GM18951 (cell line): ENCODE measurements at regions of chr17 and their contacts with region 1.

Region 1: GRCh38 chr17:57906910-57907309 is 48.3 kb downstream of the CUEDC1 start:
- POLR2A ChIP-seq: no peak

Region 2: DNA sequence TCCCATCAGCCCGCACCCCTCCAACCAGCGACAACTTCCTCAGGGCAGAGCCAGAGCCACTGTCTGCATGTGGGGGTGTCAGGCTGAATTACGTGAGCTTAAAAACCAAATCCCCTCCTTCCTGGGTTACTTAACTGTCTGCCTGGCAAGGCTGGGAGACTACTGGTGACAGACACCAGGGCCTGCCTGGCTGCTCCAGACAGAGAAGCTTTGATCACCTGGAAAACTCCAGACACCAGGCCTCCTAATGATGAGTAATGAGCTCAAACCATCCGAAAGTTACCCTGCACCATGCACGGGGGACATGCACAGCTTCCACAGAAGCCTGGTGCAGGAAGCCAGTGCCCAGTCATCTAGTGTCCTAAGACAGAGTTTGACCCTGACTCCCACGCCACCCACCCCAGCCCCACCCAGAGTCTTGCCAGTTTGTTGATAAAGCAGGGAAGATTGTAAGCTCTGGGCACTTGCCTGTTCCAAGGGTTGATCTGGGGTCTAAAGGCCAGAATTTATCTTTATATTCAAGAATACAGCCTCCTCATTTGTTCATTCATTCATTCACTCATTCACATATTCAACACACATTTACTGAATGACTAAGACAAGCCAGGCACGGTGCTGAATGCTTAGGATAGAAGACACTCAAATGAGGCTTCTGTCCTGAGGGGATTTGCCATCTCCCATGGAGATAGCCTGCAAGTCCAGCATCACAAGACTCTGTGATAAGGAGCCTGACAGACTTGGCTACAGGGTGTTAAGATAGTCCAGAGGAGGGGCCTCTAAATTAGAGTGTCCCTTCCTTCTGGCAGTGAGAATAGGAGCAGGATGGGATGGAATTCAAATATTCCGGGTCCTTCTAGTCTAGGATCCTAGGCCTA is 154.6 kb before region 1 on chr17:
- in situ Hi-C with region 1: no loop called
- POLR2A ChIP-seq: no peak

Region 3: GRCh38 chr17:57946798-57947358 is 40.0 kb after region 1 on chr17:
- in situ Hi-C with region 1: loop called (anchors 5 kb)
- POLR2A ChIP-seq: no peak